ENCODE measurements at regions of chr2 and their contacts with region 1.

Region 1: DNA sequence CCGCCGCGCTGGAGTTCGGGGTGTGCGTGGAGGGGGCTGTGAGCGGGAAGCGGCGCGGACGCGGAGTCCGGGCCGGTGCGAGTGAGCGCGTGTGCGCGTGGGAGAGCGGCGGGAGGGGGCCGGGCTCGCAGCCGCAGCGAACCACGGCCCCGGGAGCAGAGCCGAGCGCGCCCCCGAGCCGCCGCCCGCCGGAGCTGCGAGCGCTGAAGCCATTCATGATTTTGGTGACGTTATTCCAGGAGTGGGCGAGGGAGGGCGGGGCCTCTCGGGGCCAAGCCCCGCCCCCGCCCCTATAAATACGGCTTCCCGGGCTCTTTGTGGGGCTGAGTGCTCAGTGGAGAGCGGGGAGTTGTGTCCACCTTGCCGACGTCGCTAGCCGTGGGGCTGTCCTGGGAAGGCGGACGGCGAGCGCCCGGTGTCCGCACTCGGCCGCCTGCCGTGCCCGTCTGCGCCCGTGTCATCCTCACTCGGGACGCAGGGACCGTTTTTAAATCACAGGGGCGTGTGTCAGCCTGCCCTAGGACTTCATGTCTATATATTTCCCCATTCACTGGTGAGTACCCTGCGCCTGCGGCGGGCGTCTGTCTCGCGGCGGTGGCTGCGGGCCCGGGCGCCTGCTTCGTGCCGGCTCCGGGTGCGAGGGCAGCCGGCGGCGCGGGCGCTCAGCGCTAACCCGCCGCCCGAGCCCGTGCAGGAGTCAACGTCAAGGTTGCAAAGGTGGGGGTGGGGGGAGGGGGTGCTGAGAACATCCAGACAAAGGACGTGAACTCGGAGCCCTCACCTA is at the start of gene LBH:
- DNase-seq: peak; percentile 78
- ATAC-seq: peak; percentile 58
- H3K4me3 Mint-ChIP-seq: peak within 1 kb of the TSS; percentile 93
- H3K27ac Mint-ChIP-seq: peak within 1 kb of the TSS; percentile 94
- H3K4me1 Mint-ChIP-seq: peaks cover 52% of the 10 kb centered on the region
- H3K27me3 Mint-ChIP-seq: no peaks in the 10 kb centered on the region
- CTCF ChIP-seq: no peak
- total RNA-seq, gene LBH: 120 and 131 TPM in 2 replicates

Region 2: DNA sequence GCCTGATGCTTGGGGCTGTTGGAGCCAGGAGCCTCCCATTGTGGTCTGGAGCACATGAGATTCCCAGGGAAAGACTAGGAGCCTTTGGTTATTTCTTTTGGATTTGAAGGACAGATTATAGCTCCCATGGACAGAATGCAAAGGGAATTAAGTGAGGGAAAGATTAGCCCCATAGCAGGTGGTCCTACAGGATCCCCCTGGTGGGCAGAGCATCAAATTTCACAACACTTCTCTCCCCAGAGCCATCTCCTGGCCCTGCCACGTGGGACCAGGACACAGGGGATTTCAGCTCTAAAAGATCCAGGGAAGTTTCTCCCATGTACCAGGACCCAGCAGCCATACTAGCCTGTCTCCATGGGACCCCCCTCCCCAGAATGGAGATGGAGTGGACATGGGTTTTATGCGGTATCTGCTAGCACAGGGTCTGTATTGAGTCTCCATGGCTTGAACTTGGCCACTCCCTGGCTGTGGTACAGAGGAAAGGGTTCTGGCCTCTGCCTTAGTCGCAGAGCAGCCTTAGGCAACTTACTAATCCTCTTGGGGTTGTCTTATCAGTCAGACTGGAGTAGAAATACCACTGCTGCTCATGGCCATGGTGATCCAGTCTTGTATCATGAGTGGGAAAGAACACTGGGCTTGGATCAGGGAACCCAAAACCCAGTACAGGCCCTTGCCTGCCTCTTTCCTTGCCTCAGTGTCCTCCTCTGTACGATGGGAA is 1742.4 kb before region 1 on chr2:
- CTCF ChIA-PET with region 1: no interaction called
- POLR2A ChIA-PET with region 1: no interaction called
- intact Hi-C with region 1: no loop called
- DNase-seq: no peak
- ATAC-seq: no peak
- H3K4me3 Mint-ChIP-seq: no peak overlapping the region
- H3K27ac Mint-ChIP-seq: no peak overlapping the region
- H3K4me1 Mint-ChIP-seq: no peaks in the 10 kb centered on the region
- H3K27me3 Mint-ChIP-seq: peaks cover 2% of the 10 kb centered on the region
- CTCF ChIP-seq: no peak

Region 3: DNA sequence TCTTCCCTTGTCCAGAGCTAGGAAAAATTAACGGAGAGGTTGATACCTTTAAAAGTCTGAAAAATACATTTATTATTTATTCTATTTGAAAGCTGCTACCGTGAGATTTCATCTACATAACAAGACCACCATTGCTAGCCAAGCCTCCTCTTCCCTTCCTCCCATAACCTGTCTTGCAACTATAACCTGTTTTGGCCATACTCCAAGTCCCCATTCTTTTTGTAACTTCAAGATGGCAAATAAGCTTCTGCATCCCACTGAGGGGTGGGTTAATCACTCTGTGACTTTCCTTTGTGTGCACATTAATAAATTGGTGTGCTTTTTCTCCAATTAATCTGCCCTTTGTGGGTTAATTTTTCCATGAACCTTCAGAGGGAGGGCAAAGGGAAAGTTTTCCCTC is 689.6 kb before region 1 on chr2:
- CTCF ChIA-PET with region 1: no interaction called
- POLR2A ChIA-PET with region 1: no interaction called
- intact Hi-C with region 1: no loop called
- DNase-seq: no peak
- ATAC-seq: no peak
- H3K4me3 Mint-ChIP-seq: no peak overlapping the region
- H3K27ac Mint-ChIP-seq: no peak overlapping the region
- H3K4me1 Mint-ChIP-seq: no peaks in the 10 kb centered on the region
- H3K27me3 Mint-ChIP-seq: peaks cover 8% of the 10 kb centered on the region
- CTCF ChIP-seq: no peak

Region 4: GRCh38 chr2:30217644-30218337 is 13.6 kb before region 1 on chr2:
- CTCF ChIA-PET with region 1: interaction called, 4 read pairs
- POLR2A ChIA-PET with region 1: interaction called, 40 read pairs
- intact Hi-C with region 1: no loop called
- DNase-seq: no peak
- ATAC-seq: peak; percentile 85
- H3K4me3 Mint-ChIP-seq: peak overlapping the region; percentile 46
- H3K27ac Mint-ChIP-seq: peak overlapping the region; percentile 24
- H3K4me1 Mint-ChIP-seq: peaks cover 36% of the 10 kb centered on the region
- H3K27me3 Mint-ChIP-seq: no peaks in the 10 kb centered on the region
- CTCF ChIP-seq: no peak

Region 5: GRCh38 chr2:30282086-30282485 is 50.7 kb after region 1 on chr2:
- CTCF ChIA-PET with region 1: interaction called, 7 read pairs
- POLR2A ChIA-PET with region 1: interaction called, 102 read pairs
- intact Hi-C with region 1: loop called (anchors 2 kb)
- DNase-seq: peak; percentile 70
- ATAC-seq: peak; percentile 96
- H3K4me3 Mint-ChIP-seq: peak overlapping the region; percentile 61
- H3K27ac Mint-ChIP-seq: peak overlapping the region; percentile 82
- H3K4me1 Mint-ChIP-seq: peaks cover 98% of the 10 kb centered on the region
- H3K27me3 Mint-ChIP-seq: no peaks in the 10 kb centered on the region
- CTCF ChIP-seq: no peak

Region 6: GRCh38 chr2:30336978-30337841 is 105.8 kb after region 1 on chr2:
- CTCF ChIA-PET with region 1: interaction called, 51 read pairs
- POLR2A ChIA-PET with region 1: interaction called, 147 read pairs
- intact Hi-C with region 1: loop called (anchors 1 kb)
- DNase-seq: peak; percentile 49
- ATAC-seq: peak; percentile 85
- H3K4me3 Mint-ChIP-seq: peak overlapping the region; percentile 76
- H3K27ac Mint-ChIP-seq: peak overlapping the region; percentile 98
- H3K4me1 Mint-ChIP-seq: peaks cover 95% of the 10 kb centered on the region
- H3K27me3 Mint-ChIP-seq: no peaks in the 10 kb centered on the region
- CTCF ChIP-seq: no peak

Region 7: GRCh38 chr2:30475542-30475941 is 244.1 kb after region 1 on chr2:
- CTCF ChIA-PET with region 1: interaction called, 30 read pairs
- POLR2A ChIA-PET with region 1: interaction called, 11 read pairs
- intact Hi-C with region 1: loop called (anchors 10 kb)
- DNase-seq: no peak
- ATAC-seq: no peak
- H3K4me3 Mint-ChIP-seq: no peak overlapping the region
- H3K27ac Mint-ChIP-seq: no peak overlapping the region
- H3K4me1 Mint-ChIP-seq: peaks cover 37% of the 10 kb centered on the region
- H3K27me3 Mint-ChIP-seq: no peaks in the 10 kb centered on the region
- CTCF ChIP-seq: no peak

Region 8: DNA sequence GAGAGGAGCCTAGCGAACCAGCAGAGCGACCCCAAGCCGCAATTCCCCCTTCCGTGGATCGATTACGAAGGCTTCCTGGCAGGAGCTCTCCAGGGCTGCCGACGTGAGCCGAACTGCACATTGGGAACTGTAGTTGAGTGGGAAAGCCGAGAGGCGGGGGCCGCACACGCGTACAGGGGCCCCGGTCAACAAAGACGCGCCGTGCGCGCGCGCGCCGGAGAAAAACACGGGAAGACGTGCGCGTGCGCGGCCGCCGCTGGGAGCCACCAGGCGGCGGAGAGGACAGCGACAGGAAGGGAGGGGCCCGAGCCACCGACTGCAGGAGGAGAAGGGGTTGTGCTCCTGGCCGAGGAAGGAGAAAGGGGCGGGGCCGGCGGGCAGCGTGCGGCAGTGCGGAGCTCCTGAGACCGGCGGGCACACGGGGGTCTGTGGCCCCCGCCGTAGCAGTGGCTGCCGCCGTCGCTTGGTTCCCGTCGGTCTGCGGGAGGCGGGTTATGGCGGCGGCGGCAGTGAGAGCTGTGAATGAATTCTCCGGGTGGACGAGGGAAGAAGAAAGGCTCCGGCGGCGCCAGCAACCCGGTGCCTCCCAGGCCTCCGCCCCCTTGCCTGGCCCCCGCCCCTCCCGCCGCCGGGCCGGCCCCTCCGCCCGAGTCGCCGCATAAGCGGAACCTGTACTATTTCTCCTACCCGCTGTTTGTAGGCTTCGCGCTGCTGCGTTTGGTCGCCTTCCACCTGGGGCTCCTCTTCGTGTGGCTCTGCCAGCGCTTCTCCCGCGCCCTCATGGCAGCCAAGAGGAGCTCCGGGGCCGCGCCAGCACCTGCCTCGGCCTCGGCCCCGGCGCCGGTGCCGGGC is 1832.1 kb after region 1 on chr2 and contains the start of gene SPAST:
- CTCF ChIA-PET with region 1: no interaction called
- POLR2A ChIA-PET with region 1: no interaction called
- intact Hi-C with region 1: loop called (anchors 5 kb)
- DNase-seq: peak; percentile 96
- ATAC-seq: peak; percentile 93
- H3K4me3 Mint-ChIP-seq: peak within 1 kb of the TSS; percentile 97
- H3K27ac Mint-ChIP-seq: peak within 1 kb of the TSS; percentile 93
- H3K4me1 Mint-ChIP-seq: peaks cover 30% of the 10 kb centered on the region
- H3K27me3 Mint-ChIP-seq: no peaks in the 10 kb centered on the region
- CTCF ChIP-seq: no peak
- total RNA-seq, gene SPAST: 17.6 and 20.8 TPM in 2 replicates

Measured in activated B cell treated with CpG ODN at 0.5 μM for 24 hours (primary cell).